T-cell (primary cell): ENCODE measurements at regions of chr19 and their contacts with region 1.

Region 1: DNA sequence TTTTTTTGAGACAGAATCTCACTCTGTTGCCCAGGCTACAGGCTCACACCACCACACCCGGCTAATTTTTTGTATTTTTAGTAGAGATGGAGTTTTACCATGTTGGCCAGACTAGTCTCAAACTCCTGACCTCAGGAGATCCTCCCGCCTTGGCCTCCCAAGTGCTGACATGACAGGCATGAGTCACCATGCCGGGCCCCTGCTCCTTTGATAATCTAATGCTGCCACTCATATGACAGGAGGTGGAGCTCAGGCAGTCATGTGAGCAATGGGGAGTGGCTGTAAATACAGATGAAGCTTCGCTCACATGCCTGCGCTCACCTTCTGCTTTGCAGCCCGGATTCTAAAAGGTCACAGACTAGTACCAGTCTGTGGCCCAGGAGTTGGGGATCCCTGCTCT is 25.1 kb downstream of the ARHGEF18 start:
- DNase-seq: no peak
- ATAC-seq: peak in 1 of 4 experiments; percentile 27
- H3K4me3 ChIP-seq: no peak overlapping the region
- H3K4me3 Mint-ChIP-seq: no peak overlapping the region
- H3K27ac ChIP-seq: no peak overlapping the region
- H3K27ac Mint-ChIP-seq: no peak overlapping the region
- H3K4me1 ChIP-seq: peaks cover 0 to 5% of the 10 kb centered on the region in 2 experiments
- H3K4me1 Mint-ChIP-seq: peaks cover 0 to 7% (median 4%) of the 10 kb centered on the region in 3 donors
- H3K27me3 ChIP-seq: peaks cover 0 to 3% of the 10 kb centered on the region in 2 experiments
- H3K27me3 Mint-ChIP-seq: no peaks in the 10 kb centered on the region

Region 2: DNA sequence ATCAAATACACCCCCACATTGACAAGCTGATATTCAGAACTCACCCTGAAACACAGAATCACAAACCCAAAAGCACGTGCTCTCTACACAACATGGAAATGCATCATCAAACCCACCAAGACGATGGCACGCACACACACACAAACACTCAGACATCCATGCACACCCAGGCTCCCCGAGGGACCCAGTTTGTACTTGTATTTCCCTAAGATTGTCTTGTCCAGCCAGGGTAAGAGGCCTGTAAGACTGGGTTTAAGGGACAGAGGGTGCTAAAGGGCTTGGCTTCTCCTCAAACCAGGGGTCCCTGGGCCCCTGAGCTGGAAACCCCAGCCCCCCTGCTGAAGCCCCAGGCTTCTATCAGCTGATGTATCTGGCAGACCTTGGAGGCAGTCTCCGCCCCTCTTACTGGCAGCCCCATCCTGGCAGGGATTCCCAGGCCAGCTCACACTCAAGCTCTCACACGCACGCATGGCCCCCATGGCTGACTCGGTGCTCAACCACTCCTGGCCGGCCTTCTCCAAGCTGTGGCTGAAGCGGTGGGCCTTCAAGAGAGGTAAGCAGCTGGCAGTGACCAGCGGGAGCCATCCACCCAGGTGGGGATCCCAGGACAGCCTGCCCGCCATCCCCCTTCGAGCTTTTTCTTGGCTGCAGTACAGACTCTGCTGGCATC is 18.6 kb before region 1 on chr19:
- CTCF ChIA-PET with region 1: no interaction called
- POLR2A ChIA-PET with region 1: no interaction called
- DNase-seq: no peak
- ATAC-seq: no peak
- H3K4me3 ChIP-seq: no peak overlapping the region
- H3K4me3 Mint-ChIP-seq: peak overlapping the region in 1 of 3 donors; percentile 100
- H3K27ac ChIP-seq: no peak overlapping the region
- H3K27ac Mint-ChIP-seq: peak overlapping the region; percentile 85
- H3K4me1 ChIP-seq: peaks cover 4 to 64% of the 10 kb centered on the region in 2 experiments
- H3K4me1 Mint-ChIP-seq: peaks cover 86 to 91% (median 87%) of the 10 kb centered on the region in 3 donors
- H3K27me3 ChIP-seq: no peaks in the 10 kb centered on the region
- H3K27me3 Mint-ChIP-seq: no peaks in the 10 kb centered on the region

Region 3: GRCh38 chr19:7386308-7386707 is 12.4 kb after region 1 on chr19:
- CTCF ChIA-PET with region 1: no interaction called
- POLR2A ChIA-PET with region 1: interaction called in 1 of 2 experiments, 12 read pairs
- DNase-seq: no peak
- ATAC-seq: no peak
- H3K4me3 ChIP-seq: no peak overlapping the region
- H3K4me3 Mint-ChIP-seq: peak overlapping the region in 2 of 3 donors; percentile 21 to 62
- H3K27ac ChIP-seq: no peak overlapping the region
- H3K27ac Mint-ChIP-seq: peak overlapping the region; percentile 78 to 80
- H3K4me1 ChIP-seq: peaks cover 0 to 22% of the 10 kb centered on the region in 2 experiments
- H3K4me1 Mint-ChIP-seq: peaks cover 20 to 39% (median 38%) of the 10 kb centered on the region in 3 donors
- H3K27me3 ChIP-seq: no peaks in the 10 kb centered on the region
- H3K27me3 Mint-ChIP-seq: no peaks in the 10 kb centered on the region